Esophagus squamous epithelium (tissue), 5 donors: ENCODE measurements at regions of chr14 and their contacts with region 1.

Region 1: DNA sequence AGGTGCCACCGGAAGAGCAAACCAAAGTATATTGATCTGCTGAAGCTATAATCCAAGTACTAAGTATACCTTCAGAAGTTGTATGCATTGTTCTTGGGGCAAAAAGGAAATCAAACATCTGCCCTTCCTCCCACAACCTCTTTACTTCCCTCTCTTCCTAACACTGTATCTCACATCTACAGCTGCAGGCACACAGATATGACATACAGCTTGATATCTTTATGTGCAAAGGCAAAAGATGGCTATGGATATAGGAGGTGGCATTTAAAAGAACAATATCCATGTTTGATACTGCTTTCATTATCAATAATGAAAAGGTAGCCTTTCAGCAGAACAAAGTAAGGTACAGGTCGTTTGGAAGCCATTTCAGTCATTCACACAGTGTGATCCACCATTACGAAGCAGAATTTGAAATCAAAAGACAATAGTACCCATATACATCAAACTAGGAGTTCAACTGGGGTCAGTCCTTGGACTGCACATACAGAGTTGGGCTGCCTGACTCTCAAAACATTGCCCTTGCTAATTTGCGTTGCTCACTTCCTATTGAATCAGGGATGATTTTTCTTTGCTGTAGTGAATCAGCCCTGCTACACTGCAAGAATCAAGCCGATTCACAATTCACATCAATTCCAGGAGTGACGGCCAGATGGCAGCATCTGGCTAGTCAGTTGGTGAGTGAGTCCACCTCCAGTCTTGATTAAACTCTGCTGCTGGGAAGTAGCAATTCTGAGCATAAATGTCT is 8.9 kb downstream of the ANG start:
- DNase-seq: no peak
- H3K4me3 ChIP-seq: no peak overlapping the region
- H3K27ac ChIP-seq: no peak overlapping the region
- H3K4me1 ChIP-seq: peaks cover 0 to 9% (median 0%) of the 10 kb centered on the region in 3 donors
- H3K27me3 ChIP-seq: no peaks in the 10 kb centered on the region
- CTCF ChIP-seq: peak; percentile 63 to 90 (median 78)
- POLR2A ChIP-seq: no peak

Region 2: DNA sequence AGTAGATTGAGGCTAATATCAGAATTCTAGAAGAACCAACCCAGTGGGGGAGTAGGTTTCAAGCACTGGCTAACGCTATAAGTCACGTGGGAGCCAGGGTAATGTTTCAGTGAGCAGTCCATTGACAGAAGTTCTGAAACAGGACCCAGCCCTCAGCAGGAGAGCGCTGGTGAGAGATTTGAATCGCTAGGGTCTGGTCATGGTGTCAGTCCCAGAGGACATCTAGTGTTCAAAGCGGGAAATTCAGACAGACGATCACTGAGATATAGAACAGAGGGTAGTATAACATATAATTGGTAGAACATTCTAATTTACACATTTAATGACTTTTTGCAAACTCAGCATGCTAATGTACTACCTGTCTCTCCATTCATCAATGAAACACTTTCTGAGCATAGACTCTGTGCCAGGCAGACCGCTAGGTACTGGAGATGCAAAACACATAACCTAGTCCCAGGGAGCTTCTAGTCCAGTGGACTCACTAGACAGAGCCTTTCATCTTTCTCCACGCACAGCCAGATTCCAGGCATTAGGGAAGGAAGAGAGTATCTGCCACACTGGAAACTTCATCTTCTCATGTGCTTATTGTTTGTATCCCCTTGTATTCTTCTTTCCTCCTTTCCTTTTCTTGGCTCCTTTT is 158.3 kb after region 1 on chr14:
- intact Hi-C with region 1: loop called (anchors 5 kb)
- DNase-seq: peak; percentile 5
- H3K4me3 ChIP-seq: no peak overlapping the region
- H3K27ac ChIP-seq: no peak overlapping the region
- H3K4me1 ChIP-seq: peaks cover 0 to 10% (median 0%) of the 10 kb centered on the region in 3 donors
- H3K27me3 ChIP-seq: peaks cover 0 to 28% (median 0%) of the 10 kb centered on the region in 4 donors
- CTCF ChIP-seq: peak; percentile 52 to 81 (median 75)
- POLR2A ChIP-seq: no peak